Endothelial cell of umbilical vein (primary cell): ENCODE measurements at regions of chr2 and their contacts with region 1.

Region 1: DNA sequence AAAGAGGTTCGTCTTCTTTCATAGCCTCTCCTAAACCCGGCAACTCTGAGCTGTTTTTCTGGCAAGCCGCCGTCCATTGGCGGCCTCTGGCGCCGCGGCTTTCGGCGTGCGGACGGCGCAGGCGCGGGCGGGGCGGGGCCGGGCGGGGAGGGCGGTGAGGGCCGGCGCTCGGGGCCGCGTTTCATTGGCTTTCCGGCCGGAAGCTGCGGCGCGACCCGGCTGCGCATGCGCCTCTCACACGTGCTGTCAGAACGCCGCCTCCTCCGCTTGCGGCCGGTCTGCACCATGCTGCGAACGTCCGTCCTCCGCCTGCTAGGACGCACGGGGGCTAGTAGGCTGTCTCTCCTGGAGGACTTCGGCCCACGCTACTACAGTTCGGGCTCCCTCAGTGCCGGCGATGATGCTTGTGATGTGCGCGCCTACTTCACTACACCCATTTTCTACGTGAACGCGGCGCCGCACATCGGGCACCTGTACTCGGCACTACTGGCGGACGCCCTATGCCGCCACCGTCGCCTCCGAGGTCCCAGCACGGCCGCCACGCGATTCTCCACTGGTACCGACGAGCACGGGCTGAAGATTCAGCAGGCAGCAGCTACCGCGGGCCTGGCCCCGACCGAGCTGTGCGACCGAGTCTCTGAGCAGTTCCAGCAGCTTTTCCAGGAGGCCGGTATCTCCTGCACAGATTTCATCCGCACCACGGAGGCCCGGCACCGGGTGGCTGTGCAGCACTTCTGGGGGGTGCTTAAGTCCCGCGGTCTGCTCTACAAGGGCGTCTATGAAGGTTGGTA is at the start of gene MARS2:
- DNase-seq: peak; percentile 93
- H3K4me3 ChIP-seq: peak within 1 kb of the TSS; percentile 54 to 85 (median 81)
- H3K27ac ChIP-seq: peak within 1 kb of the TSS; percentile 34
- H3K4me1 ChIP-seq: peaks cover 22% of the 10 kb centered on the region
- H3K27me3 ChIP-seq: peaks cover 0 to 3% of the 10 kb centered on the region in 2 experiments
- CTCF ChIP-seq: no peak
- POLR2A ChIP-seq: peak; percentile 95
- total RNA-seq, gene MARS2: 5.1 and 5.3 TPM in 2 replicates

Region 2: GRCh38 chr2:197453161-197453914 is 252.0 kb before region 1 on chr2 and contains the start of gene COQ10B:
- CTCF ChIA-PET with region 1: no interaction called
- POLR2A ChIA-PET with region 1: no interaction called
- dilution Hi-C with region 1: no loop called
- intact Hi-C with region 1: loop called (anchors 1 kb)
- DNase-seq: peak; percentile 100
- H3K4me3 ChIP-seq: peak within 1 kb of the TSS; percentile 61 to 95 (median 75)
- H3K27ac ChIP-seq: peak within 1 kb of the TSS; percentile 98
- H3K4me1 ChIP-seq: peaks cover 14% of the 10 kb centered on the region
- H3K27me3 ChIP-seq: no peaks in the 10 kb centered on the region
- CTCF ChIP-seq: peak in 1 of 2 donors; percentile 30
- POLR2A ChIP-seq: peak; percentile 94
- total RNA-seq, gene COQ10B: 15.1 and 19.5 TPM in 2 replicates

Region 3: GRCh38 chr2:197515739-197516392 is 189.4 kb before region 1 on chr2 and contains the start of gene MOB4:
- CTCF ChIA-PET with region 1: interaction called, 9 read pairs
- POLR2A ChIA-PET with region 1: no interaction called
- dilution Hi-C with region 1: no loop called
- intact Hi-C with region 1: loop called (anchors 2 kb)
- DNase-seq: peak; percentile 97
- H3K4me3 ChIP-seq: peak within 1 kb of the TSS; percentile 38 to 81 (median 71)
- H3K27ac ChIP-seq: peak within 1 kb of the TSS; percentile 78
- H3K4me1 ChIP-seq: peaks cover 17% of the 10 kb centered on the region
- H3K27me3 ChIP-seq: no peaks in the 10 kb centered on the region
- CTCF ChIP-seq: no peak
- POLR2A ChIP-seq: peak; percentile 94
- total RNA-seq, gene MOB4: 24.0 and 27.9 TPM in 2 replicates

Region 4: GRCh38 chr2:197675711-197676188 is 29.6 kb before region 1 on chr2:
- CTCF ChIA-PET with region 1: interaction called, 10 read pairs
- POLR2A ChIA-PET with region 1: interaction called, 12 read pairs
- dilution Hi-C with region 1: no loop called
- intact Hi-C with region 1: loop called (anchors 1 kb)
- DNase-seq: peak; percentile 88
- H3K4me3 ChIP-seq: peak overlapping the region; percentile 57 to 99 (median 98)
- H3K27ac ChIP-seq: peak overlapping the region; percentile 78
- H3K4me1 ChIP-seq: peaks cover 28% of the 10 kb centered on the region
- H3K27me3 ChIP-seq: no peaks in the 10 kb centered on the region
- CTCF ChIP-seq: no peak
- POLR2A ChIP-seq: peak; percentile 35

Region 5: DNA sequence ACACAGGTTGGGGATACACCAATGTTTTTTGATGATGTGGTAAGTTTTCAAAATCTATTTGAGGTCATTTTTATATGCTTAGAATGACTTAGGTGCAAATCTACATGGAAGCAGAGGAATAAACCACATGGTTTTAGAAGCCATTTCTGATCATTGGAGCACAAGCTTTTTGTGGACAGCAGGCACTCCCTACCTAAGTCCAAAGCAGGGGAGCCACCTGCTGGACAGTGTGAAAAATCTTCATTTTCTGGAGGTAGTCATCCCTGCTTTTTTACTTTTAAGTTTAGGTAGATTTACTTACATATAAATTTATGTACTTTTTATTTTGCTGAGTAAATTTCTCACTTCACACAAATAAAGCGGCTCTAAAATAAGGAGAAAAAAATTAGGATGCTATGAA is 422.3 kb after region 1 on chr2:
- CTCF ChIA-PET with region 1: interaction called, 3 read pairs
- POLR2A ChIA-PET with region 1: no interaction called
- dilution Hi-C with region 1: no loop called
- intact Hi-C with region 1: loop called (anchors 5 kb)
- DNase-seq: peak; percentile 73
- H3K4me3 ChIP-seq: no peak overlapping the region
- H3K27ac ChIP-seq: no peak overlapping the region
- H3K4me1 ChIP-seq: no peaks in the 10 kb centered on the region
- H3K27me3 ChIP-seq: no peaks in the 10 kb centered on the region
- CTCF ChIP-seq: peak; percentile 60 to 61
- POLR2A ChIP-seq: no peak